Posterior cingulate gyrus (tissue), 11 donors: ENCODE measurements at regions of chr5 and their contacts with region 1.

Region 1: DNA sequence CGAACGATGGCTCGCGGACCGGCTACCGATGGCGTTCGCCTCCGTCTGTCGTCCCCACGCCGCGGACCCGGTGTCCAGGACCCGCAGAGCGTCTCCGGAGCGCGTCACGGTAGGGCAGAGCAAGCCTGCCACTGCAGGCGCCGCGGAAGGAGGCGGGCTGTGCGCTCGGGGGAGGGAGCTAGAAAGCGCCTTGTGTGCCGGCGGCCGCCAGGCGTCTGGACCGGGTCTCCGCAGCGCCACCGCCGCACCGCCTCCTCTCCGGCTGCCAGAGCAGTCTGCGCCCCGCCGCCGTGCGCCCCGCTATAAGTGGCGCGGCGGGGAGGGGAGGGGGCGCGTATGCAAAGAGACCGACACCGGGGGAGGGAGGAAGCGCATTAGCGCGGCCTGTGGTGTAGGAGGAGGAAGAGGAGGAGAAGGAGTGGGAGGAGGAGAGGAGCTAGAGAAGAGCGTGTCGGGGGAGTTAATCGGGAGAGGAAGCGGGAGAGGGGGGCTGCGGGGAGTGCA is at the start of gene ENC1:
- DNase-seq: peak; percentile 67 to 97 (median 83)

Region 2: GRCh38 chr5:73792687-73793320 is 847.7 kb before region 1 on chr5:
- intact Hi-C with region 1: loop called (anchors 10 kb)
- DNase-seq: peak; percentile 50 to 96 (median 79)

Region 3: DNA sequence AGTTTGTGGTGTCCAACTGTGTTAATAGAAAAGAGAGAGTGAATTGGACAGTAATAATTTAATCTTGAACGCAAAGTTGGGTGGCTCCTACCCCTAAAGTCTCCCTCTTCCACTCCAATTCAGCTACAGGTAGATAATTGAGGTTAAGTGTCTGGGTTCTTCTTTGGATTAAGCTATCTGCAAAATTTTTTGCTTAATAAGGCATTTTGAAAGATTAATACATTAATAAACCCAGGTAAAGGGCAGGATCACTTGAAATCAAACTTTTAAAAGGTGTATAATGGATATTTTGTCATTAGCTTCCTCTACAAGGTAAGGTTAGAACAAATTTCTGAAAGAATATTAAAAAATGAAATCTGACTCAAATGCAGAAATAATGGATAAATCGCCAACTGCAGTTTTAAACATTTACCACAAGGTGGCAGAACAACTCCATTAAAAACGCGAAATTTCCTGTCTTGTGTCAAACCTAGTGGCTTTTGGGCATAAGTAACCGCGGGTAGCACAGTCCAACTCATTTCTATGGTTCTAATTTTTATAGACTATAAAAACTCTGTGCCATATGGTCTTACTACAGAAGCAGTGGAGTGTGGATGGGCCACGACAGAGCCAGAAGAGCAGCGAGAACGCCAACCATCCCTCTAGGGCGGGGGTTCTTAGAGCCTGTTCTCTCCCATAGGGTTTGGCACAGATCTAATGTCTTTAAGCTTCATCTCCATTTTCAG is 738.0 kb before region 1 on chr5:
- intact Hi-C with region 1: loop called (anchors 2 kb)
- DNase-seq: peak in 4 of 10 donors; percentile 27 to 84 (median 80)

Region 4: GRCh38 chr5:74063821-74064220 is 576.7 kb before region 1 on chr5:
- intact Hi-C with region 1: no loop called
- DNase-seq: no peak

Region 5: GRCh38 chr5:74226716-74227485 is 413.6 kb before region 1 on chr5:
- intact Hi-C with region 1: loop called (anchors 10 kb)
- DNase-seq: peak in 9 of 10 donors; percentile 10 to 90 (median 56)

Region 6: GRCh38 chr5:74294231-74294705 is 346.2 kb before region 1 on chr5:
- intact Hi-C with region 1: loop called (anchors 10 kb)
- DNase-seq: peak; percentile 18 to 93 (median 63)

Region 7: DNA sequence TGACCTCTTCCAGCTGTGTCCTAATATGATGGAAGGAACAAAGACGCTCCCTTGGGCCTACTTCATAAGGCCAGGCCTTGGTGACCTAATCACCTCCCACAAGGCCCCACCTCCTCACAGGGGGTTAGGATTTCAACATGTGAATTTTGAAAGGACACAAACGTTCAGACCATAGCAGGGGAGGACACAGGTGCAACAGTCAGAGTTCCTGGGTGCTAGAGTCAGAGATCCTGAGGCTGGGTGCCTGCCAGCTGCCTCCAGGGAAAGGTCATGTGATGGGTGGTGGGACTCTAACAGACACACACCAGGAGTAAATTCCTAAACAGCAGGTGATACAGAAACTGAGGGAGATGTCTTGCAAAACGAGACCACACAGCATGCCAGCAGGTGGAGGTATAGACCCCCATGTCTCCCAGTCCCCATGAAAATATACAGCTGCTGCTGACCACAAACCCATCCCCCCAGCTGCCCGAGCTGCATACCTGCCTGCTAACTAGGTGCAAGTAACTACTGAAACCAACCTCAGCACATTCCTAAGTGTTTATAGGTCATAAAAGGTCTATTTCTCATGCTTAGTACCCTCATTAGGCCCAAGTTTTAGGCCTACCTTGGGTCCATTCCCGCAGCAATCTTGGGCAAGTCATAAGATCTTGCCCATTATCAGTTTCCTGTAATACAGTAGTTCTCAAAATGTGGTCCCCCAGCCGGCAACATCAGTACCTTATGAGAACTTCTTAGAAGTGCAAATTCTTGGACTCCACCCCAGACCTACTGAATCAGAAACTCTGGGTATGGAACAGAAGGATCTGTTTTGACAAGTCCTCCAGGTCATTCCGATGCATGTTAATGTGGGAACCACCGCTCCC is 245.4 kb before region 1 on chr5:
- intact Hi-C with region 1: loop called (anchors 10 kb)
- DNase-seq: no peak

Region 8: DNA sequence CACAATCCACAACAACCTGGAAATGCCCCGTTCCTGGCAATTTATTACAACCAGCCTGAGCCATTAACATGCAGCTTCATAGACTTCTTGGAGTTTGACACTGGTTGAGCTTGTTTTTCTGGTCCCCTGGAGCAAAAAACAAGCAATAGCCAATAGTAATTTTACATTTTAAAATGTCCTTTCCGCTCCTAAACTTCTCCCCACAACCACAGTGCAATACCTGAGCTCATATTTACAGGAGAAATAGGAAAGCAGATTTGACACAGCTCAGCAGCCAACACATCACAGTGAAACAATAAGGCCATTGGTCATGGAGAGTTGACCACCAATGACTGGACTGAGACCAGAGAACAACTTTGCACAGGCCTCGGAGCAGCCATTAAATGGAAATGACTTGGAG is 73.0 kb before region 1 on chr5:
- intact Hi-C with region 1: no loop called
- DNase-seq: no peak

Region 9: DNA sequence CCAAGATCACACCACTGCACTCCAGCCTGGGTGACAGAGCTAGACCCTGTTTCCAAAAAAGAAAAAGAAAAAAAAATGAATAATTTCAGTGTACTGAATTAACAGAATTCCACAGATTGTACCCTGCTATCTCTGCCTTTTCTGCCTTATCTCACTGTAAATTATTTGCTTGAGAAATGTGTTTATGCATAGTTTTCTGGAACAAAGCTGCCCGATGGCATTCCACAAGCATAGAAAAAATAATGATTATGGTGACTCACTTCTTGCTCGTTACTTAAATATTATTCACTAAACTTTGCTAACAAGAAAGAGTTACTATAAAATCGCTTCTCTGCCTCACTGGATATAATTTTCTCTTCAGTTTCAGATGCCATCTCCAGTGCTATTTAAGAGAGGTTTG is 314.4 kb after region 1 on chr5:
- intact Hi-C with region 1: no loop called
- DNase-seq: no peak